Right cardiac atrium (tissue), 5 donors: ENCODE measurements at regions of chr1 and their contacts with region 1.

Region 1: DNA sequence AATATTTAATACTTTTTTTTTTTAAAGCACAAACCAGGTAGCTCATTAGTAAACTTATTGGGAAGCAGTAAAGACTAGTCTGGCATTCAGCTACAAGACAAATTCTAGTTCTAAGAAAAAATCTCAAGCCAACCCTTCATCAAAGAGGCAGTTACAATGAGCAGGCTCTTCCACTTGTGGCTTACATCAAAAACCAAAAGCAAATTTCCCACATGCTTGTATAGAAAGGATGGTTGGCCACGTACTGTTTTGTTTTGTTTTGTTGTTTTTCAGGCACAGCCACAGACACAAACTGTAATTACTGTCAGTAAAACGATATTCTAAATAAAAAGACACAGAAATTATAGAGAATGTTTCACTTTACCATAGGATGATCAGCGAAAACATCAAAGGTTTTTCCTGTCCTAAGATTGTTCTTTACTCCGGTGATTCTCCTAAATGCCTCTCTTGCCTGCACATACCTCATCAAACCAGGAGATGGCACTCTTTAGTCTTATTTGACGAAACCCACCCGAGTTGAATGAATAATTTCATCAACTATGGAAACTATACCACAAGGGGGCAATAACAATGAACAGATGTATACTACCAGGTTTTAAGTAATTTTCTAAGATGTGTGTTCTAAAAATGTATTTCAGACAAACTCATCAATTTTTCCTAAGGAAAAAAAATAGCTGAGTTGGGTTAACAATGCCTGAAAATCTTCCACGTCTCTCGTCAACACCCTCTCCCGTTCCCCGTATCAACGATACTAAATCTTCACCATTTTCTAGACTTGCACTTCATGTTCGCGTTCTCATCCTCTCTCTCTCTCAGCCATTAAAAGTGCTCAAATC is 26.9 kb downstream of the RPL5 start:
- DNase-seq: no peak
- ATAC-seq: peak; percentile 76 to 78
- H3K4me3 ChIP-seq: peak overlapping the region; percentile 47
- H3K27ac ChIP-seq: no peak overlapping the region
- H3K4me1 ChIP-seq: no peaks in the 10 kb centered on the region
- H3K27me3 ChIP-seq: no peaks in the 10 kb centered on the region

Region 2: DNA sequence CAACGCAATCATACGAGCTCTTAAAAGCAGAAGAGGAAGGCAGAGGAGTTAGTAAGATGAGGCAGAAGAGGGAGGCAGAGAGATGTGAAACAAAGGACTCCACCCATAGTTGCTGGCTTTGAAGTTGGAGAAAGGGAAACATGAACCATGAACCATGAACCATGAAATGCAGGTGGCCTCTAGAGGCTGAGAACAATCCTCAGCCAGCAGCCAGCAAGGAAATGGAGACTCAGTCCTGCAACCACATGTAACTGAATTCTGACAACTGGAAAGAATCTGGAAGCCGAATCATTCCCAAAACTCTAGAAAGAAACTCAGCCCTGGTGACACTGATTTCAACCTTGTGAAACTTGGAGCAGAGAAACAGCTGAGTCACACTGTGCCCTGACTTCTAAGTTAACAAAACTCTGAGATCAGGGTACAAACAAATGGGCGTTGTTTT is 92.4 kb after region 1 on chr1:
- intact Hi-C with region 1: loop called in 1 of 4 experiments (anchors 5 kb)
- DNase-seq: no peak
- ATAC-seq: peak; percentile 40 to 48
- H3K4me3 ChIP-seq: no peak overlapping the region
- H3K27ac ChIP-seq: peak overlapping the region; percentile 36
- H3K4me1 ChIP-seq: no peaks in the 10 kb centered on the region
- H3K27me3 ChIP-seq: no peaks in the 10 kb centered on the region

Region 3: DNA sequence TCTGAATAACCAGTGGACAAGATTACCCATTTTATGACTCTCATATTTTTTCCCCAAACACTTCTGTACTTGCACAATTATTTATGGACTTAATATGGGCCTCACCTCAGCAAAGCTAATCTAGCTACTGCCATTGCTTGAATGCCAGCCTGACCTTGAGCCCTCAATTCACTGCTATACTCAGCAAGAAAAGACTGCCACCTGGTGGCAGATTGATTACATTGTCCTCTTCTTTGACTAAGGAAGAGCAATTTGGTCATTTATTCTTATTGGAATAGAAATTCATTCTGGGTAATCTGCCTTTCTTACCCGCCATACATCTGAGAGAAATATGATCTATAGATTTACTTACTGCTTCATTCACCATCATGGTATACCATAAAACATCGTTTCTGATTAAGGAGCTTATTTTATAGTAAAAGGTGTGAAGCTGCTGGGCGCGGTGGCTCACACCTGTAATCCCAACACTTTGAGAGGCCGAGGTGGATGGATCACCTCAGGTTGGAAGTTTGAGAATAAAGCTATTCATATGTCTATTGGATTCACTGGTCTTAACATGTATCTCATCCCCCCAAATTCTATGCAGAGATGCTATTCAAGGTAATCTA is 135.4 kb after region 1 on chr1:
- intact Hi-C with region 1: loop called (anchors 1 to 2 kb)
- DNase-seq: peak in 2 of 3 donors; percentile 37 to 48
- ATAC-seq: peak; percentile 88 to 89
- H3K4me3 ChIP-seq: no peak overlapping the region
- H3K27ac ChIP-seq: no peak overlapping the region
- H3K4me1 ChIP-seq: no peaks in the 10 kb centered on the region
- H3K27me3 ChIP-seq: no peaks in the 10 kb centered on the region